Activated CD8-positive, alpha-beta T cell treated with anti-CD3 and anti-CD28 coated beads, Interleukin-2, amount 10 ng/mL, durations not matched to agents 7 days and 5 days (primary cell): ENCODE measurements at regions of chr19 and their contacts with region 1.

Region 1: GRCh38 chr19:39792999-39793546 is 14.4 kb downstream of the LEUTX start:
- DNase-seq: peak; percentile 82
- ATAC-seq: peak; percentile 96
- H3K4me3 Mint-ChIP-seq: peak overlapping the region; percentile 76
- H3K27ac Mint-ChIP-seq: no peak overlapping the region
- H3K4me1 Mint-ChIP-seq: peaks cover 19% of the 10 kb centered on the region
- H3K27me3 Mint-ChIP-seq: peaks cover 22% of the 10 kb centered on the region

Region 2: GRCh38 chr19:39752390-39752789 is 40.7 kb before region 1 on chr19:
- CTCF ChIA-PET with region 1: no interaction called
- POLR2A ChIA-PET with region 1: no interaction called
- DNase-seq: no peak
- ATAC-seq: no peak
- H3K4me3 Mint-ChIP-seq: no peak overlapping the region
- H3K27ac Mint-ChIP-seq: no peak overlapping the region
- H3K4me1 Mint-ChIP-seq: no peaks in the 10 kb centered on the region
- H3K27me3 Mint-ChIP-seq: peaks cover 25% of the 10 kb centered on the region

Region 3: DNA sequence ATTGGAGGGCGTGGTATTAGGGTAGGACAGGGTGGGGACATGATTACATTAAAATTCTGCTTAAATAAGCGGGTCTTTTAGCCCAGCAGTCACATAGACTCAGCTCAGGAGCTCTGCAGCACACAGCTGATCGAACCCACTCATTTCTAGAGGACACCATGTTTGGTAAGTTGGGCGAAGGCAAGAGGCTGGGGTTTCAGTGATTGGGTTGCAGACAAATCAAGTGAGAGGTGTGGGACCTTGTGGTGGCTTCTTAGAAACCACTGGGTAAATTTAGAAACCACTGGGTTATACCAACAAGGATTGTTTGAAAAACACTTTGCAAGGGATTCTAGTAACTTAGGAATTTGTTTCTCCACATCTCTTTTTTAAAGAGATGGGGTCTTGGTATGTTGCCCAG is 14.3 kb before region 1 on chr19 and contains the start of gene LEUTX:
- CTCF ChIA-PET with region 1: interaction called, 14 read pairs
- POLR2A ChIA-PET with region 1: no interaction called
- DNase-seq: peak; percentile 33
- ATAC-seq: no peak
- H3K4me3 Mint-ChIP-seq: no peak within 1 kb of the TSS
- H3K27ac Mint-ChIP-seq: no peak within 1 kb of the TSS
- H3K4me1 Mint-ChIP-seq: peaks cover 15% of the 10 kb centered on the region
- H3K27me3 Mint-ChIP-seq: peaks cover 34% of the 10 kb centered on the region
- total RNA-seq, gene LEUTX: not detected

Region 4: DNA sequence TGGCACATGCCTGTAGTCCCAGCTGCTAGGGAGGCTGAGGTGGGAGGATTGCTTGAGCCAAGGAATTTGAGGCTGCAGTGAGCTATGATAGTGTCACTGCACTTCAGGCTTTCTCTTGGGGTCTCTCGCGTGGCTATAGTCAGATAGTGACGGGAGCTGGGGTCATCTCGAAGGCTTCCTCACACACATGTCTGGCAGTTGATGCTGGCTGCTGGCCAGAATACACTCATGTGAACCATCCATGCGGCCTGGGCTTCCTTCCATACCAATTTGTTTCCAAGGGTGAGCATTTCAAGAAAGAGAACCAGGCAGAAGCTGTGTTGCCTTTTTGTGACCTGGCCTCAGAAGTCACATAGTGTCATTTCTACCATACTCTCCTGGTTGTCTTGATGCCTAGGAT is 12.0 kb after region 1 on chr19:
- CTCF ChIA-PET with region 1: interaction called, 18 read pairs
- POLR2A ChIA-PET with region 1: no interaction called
- DNase-seq: no peak
- ATAC-seq: no peak
- H3K4me3 Mint-ChIP-seq: no peak overlapping the region
- H3K27ac Mint-ChIP-seq: no peak overlapping the region
- H3K4me1 Mint-ChIP-seq: no peaks in the 10 kb centered on the region
- H3K27me3 Mint-ChIP-seq: peaks cover 13% of the 10 kb centered on the region

Region 5: DNA sequence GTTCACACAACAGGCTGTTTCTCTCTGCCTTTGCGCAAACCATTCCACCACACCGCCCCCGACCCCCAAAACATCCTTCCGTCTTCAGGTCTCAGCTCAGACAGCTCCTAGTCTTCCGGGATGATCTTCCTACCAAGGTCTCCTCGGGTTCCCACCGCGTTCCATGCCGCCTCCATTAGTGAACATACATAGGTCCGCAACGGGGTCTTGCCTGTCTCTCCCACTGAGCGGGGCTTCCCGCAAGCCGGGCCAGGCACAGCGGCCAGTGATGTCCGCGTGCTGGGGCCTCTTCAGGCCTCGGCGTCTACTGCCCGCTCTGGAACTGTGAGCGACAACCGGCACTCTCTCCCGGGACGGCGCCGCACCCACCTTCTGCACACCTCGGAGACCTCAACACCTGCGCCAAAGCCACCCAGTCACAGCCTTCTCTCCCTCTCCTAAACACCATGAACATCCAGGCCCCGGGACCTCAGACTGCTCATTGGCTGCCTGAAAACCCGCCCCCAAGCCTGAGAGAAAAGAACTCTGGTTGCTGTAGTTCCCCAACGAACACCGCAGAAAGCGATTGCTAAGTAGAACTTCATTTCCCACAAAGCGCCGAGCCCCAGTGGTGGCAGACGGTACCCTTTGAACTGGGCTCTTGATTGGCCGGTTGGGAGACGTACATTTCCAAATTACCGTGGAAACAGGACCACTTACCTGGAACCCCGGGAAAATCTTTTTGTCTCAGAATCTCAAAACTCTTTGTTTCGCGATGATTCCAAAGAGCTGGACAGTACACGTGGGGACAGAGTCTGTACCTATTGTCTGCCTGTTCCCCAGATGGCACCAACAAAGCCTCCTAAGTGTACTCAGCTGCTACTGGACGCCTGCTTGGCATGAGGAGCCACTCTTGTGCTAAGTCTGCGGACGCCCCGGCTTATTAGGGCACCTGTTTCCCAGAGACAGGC is 31.3 kb after region 1 on chr19:
- CTCF ChIA-PET with region 1: interaction called, 16 read pairs
- POLR2A ChIA-PET with region 1: no interaction called
- DNase-seq: peak; percentile 94
- ATAC-seq: peak; percentile 99
- H3K4me3 Mint-ChIP-seq: no peak overlapping the region
- H3K27ac Mint-ChIP-seq: no peak overlapping the region
- H3K4me1 Mint-ChIP-seq: peaks cover 14% of the 10 kb centered on the region
- H3K27me3 Mint-ChIP-seq: no peaks in the 10 kb centered on the region

Region 6: GRCh38 chr19:39833464-39834286 is 40.6 kb after region 1 on chr19 and contains the start of gene DYRK1B:
- CTCF ChIA-PET with region 1: interaction called, 13 read pairs
- POLR2A ChIA-PET with region 1: no interaction called
- DNase-seq: peak; percentile 99
- ATAC-seq: peak; percentile 91
- H3K4me3 Mint-ChIP-seq: peak within 1 kb of the TSS; percentile 67
- H3K27ac Mint-ChIP-seq: peak within 1 kb of the TSS; percentile 83
- H3K4me1 Mint-ChIP-seq: peaks cover 34% of the 10 kb centered on the region
- H3K27me3 Mint-ChIP-seq: no peaks in the 10 kb centered on the region
- total RNA-seq, gene DYRK1B: 7.5 to 8.5 TPM